ENCODE measurements at regions of chr4 and their contacts with region 1.

Region 1: DNA sequence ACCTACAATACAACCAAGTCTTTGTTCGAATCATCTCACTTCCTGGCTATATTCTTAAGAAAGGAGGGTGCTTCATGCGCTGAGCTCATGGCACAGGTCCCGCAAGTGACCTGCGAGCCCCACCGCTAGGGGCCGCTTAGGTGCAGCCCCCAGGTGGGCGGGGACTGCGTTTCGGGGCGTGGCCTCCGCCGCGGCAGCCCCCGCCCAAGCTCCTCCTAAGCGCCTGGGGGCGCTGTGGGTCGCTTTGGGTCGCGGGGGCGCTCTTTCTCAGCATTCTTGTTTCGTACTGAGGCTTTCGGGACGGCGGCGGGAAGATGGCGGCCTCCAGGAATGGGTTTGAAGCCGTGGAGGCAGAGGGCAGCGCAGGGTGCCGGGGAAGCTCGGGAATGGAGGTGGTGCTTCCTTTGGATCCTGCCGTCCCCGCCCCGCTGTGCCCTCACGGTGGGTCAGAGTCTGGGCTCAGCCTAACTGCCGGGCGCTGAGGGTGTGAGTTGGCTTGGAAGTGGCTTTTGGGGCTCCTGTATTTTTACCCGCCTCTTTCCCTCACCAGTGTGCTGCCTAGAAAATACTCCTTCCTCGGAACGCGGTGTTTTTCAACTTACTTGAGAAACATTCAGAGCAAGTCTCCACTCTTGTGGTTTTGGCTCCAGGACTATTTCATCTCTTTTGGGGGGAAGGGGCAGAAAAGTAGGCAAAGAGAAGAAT is at the start of gene ZCCHC4:
- DNase-seq: peak; percentile 88
- H3K4me3 Mint-ChIP-seq: peak within 1 kb of the TSS; percentile 99
- H3K27ac Mint-ChIP-seq: peak within 1 kb of the TSS; percentile 96
- H3K4me1 Mint-ChIP-seq: peaks cover 37% of the 10 kb centered on the region
- H3K27me3 Mint-ChIP-seq: peaks cover under 1% of the 10 kb centered on the region
- total RNA-seq, gene ZCCHC4: 10.3 to 10.8 TPM

Region 2: GRCh38 chr4:24991015-24991414 is 321.6 kb before region 1 on chr4:
- CTCF ChIA-PET with region 1: no interaction called
- POLR2A ChIA-PET with region 1: no interaction called
- DNase-seq: no peak
- H3K4me3 Mint-ChIP-seq: no peak overlapping the region
- H3K27ac Mint-ChIP-seq: no peak overlapping the region
- H3K4me1 Mint-ChIP-seq: no peaks in the 10 kb centered on the region
- H3K27me3 Mint-ChIP-seq: no peaks in the 10 kb centered on the region

Region 3: DNA sequence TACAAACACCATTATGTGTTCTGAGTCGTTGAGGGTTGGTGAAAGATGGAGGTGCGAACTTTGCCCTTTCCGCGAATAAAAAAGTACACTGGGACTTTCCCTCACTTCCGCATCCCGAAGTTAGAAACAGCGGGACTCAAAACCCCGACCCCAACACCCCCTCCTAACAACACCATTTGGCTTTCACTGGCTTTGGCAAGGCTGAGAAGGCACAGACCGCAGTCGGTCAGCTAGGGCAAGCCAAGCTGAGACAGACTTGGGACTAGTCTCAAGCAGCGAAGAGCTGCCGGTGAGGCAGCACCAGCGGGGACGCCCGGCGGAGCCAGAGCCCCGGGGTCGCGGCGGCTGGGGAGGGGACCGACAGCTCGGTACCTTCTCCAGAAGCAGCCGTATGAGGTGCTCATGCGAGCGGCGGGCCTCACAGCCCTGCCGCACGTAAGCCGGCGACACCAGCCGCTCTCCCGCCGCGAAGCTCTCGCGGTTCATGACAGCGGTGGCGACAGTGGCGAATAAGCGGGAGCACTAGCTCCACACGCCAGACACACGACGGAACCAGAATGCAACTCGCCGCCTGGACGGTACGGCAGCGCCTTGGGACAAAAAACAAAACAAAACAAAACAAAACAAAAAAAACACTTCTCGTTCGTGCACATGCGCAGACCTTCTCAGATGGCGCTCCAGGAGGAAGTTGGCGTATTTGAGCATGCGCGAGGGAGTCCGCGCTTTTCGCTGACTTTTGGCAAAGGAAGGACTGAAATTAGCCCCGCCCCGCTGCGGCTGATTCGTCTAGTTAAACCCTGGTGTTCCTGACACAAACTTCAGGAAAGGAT is 152.5 kb before region 1 on chr4 and contains the start of gene SEPSECS:
- CTCF ChIA-PET with region 1: interaction called, 27 read pairs
- POLR2A ChIA-PET with region 1: interaction called, 4 read pairs
- DNase-seq: peak; percentile 98
- H3K4me3 Mint-ChIP-seq: peak within 1 kb of the TSS; percentile 89
- H3K27ac Mint-ChIP-seq: peak within 1 kb of the TSS; percentile 94
- H3K4me1 Mint-ChIP-seq: peaks cover 53% of the 10 kb centered on the region
- H3K27me3 Mint-ChIP-seq: no peaks in the 10 kb centered on the region
- total RNA-seq, gene SEPSECS: 13.9 to 14.3 TPM

Region 4: GRCh38 chr4:25282061-25282460 is 30.6 kb before region 1 on chr4:
- CTCF ChIA-PET with region 1: interaction called, 14 read pairs
- POLR2A ChIA-PET with region 1: no interaction called
- DNase-seq: no peak
- H3K4me3 Mint-ChIP-seq: no peak overlapping the region
- H3K27ac Mint-ChIP-seq: no peak overlapping the region
- H3K4me1 Mint-ChIP-seq: no peaks in the 10 kb centered on the region
- H3K27me3 Mint-ChIP-seq: peaks cover 8% of the 10 kb centered on the region

Region 5: DNA sequence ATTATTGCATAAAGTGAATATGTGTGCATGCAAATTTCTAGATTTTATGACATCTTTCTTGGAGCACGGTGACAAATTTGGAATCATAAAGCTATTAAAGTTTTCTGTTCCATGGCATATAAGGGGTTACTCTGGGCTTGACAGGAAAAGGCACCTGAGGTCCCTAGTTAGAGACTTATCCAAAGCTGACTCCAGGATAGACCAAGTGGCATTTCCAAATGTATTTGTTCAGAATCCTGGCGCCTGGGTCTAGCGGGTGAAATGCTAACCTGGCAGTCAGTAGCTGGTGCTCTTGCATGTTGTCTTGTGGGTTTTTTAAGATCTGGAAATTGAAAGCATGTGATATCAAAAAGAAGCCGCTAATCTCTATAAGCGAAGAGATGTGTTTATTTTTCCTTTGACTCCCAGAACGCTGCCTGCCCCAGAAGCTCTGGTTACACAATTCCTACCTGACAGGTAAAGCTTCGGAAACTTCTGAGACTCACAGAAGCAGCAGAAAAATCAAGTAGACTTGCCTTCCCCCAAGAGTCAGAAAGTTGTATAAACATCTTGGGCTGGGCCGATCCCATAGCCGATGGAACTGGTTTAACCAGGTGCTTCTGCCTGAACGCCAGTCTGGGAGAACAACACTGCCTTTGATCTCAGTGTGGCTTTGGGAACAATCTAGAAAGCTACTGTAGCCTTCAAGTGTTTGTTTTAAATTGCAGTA is 13.0 kb before region 1 on chr4:
- CTCF ChIA-PET with region 1: interaction called, 38 read pairs
- POLR2A ChIA-PET with region 1: no interaction called
- DNase-seq: no peak
- H3K4me3 Mint-ChIP-seq: no peak overlapping the region
- H3K27ac Mint-ChIP-seq: no peak overlapping the region
- H3K4me1 Mint-ChIP-seq: no peaks in the 10 kb centered on the region
- H3K27me3 Mint-ChIP-seq: peaks cover 14% of the 10 kb centered on the region

Region 6: GRCh38 chr4:25351777-25352416 is 39.2 kb after region 1 on chr4:
- CTCF ChIA-PET with region 1: interaction called, 11 read pairs
- POLR2A ChIA-PET with region 1: no interaction called
- DNase-seq: no peak
- H3K4me3 Mint-ChIP-seq: no peak overlapping the region
- H3K27ac Mint-ChIP-seq: no peak overlapping the region
- H3K4me1 Mint-ChIP-seq: peaks cover under 1% of the 10 kb centered on the region
- H3K27me3 Mint-ChIP-seq: no peaks in the 10 kb centered on the region

Region 7: DNA sequence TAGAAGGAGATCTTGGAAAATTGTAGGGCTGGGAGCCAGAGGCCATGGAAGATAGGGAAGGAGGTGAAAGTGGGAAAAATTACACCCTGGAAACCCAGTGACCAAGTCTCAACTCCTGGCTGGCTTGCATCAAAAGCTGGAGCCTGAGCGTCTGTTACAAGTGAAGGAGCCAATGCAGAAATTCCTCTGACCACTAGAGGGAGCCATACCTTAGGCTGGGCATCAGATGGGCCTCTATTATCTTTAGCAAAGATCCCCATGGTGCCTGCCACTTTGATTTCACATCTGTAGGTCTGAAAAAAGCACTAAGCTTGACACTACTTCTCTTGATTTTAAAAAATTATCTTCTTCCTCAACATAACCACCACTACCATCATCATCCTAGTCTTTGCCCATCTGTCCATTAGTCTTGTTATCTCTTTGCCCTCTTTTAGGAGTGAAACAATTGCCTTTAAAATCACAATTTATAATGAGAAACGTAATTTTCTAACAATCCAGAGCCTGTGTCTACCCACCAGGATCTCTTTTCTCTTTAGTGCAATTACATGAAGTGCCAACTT is 127.3 kb after region 1 on chr4:
- CTCF ChIA-PET with region 1: no interaction called
- POLR2A ChIA-PET with region 1: no interaction called
- DNase-seq: peak; percentile 69
- H3K4me3 Mint-ChIP-seq: no peak overlapping the region
- H3K27ac Mint-ChIP-seq: no peak overlapping the region
- H3K4me1 Mint-ChIP-seq: no peaks in the 10 kb centered on the region
- H3K27me3 Mint-ChIP-seq: no peaks in the 10 kb centered on the region

Measured in activated CD4-positive, alpha-beta T cell treated with anti-CD3 and anti-CD28 coated beads, Interleukin-2, amount 10 ng/mL, durations not matched to agents 7 days and 5 days (primary cell).